ENCODE measurements at regions of chr15 and their contacts with region 1.

Region 1: DNA sequence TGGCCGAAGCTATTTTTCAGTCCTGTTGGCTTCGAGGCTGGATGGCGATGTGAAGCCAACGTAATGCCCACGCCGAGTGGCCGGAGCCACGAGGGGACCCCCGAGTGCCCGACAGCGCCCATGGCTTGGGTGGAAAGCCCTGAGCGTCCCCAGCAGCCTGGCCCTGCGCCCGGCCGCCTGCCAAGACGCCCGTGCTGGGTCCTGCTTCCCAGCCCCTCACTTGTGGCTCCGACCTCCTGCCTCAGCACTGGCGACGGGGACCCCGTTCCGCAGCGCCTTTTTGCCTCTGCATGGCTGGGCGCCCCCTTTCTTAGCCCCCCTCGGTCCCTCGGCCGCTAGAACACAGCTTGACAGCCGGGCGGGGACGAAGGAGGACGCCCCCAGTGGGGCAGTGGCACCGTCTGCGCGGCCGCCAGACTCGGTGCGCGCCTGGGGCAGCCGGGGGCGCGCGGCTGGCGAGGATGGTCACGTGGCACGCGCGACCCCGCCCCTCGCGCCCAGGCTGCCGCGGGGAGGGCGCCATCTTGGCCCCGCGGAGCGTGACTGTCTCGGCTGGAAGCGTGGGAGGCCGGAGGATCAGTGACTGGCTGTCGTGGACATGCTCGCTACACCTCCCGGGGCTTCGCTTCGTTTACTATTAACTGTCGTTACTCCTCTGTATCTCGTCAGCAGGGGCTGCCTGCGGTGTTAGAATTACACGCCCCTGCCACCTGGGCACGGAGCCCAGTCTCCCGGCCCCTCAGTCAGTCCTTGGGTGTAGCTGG is 626 bp upstream of the GPR176 start:
- DNase-seq: peak; percentile 58 to 86 (median 73)
- ATAC-seq: peak; percentile 97
- H3K4me3 ChIP-seq: peak overlapping the region; percentile 80
- H3K4me3 Mint-ChIP-seq: peak overlapping the region; percentile 75 to 92 (median 88)
- H3K27ac ChIP-seq: no peak overlapping the region
- H3K27ac Mint-ChIP-seq: peak overlapping the region in 8 of 9 donors; percentile 43 to 90 (median 77)
- H3K4me1 ChIP-seq: peaks cover 0 to 5% of the 10 kb centered on the region in 2 donors
- H3K4me1 Mint-ChIP-seq: peaks cover 6 to 29% (median 12%) of the 10 kb centered on the region in 7 donors
- H3K27me3 ChIP-seq: peaks cover 5 to 15% of the 10 kb centered on the region in 2 donors
- H3K27me3 Mint-ChIP-seq: peaks cover 14 to 32% (median 23%) of the 10 kb centered on the region in 5 donors

Region 2: GRCh38 chr15:39887832-39888231 is 32.9 kb before region 1 on chr15:
- CTCF ChIA-PET with region 1: no interaction called
- POLR2A ChIA-PET with region 1: no interaction called
- intact Hi-C with region 1: no loop called
- DNase-seq: peak in 1 of 9 donors; percentile 8
- ATAC-seq: no peak
- H3K4me3 ChIP-seq: no peak overlapping the region
- H3K4me3 Mint-ChIP-seq: no peak overlapping the region
- H3K27ac ChIP-seq: no peak overlapping the region
- H3K27ac Mint-ChIP-seq: no peak overlapping the region
- H3K4me1 ChIP-seq: no peaks in the 10 kb centered on the region
- H3K4me1 Mint-ChIP-seq: no peaks in the 10 kb centered on the region
- H3K27me3 ChIP-seq: no peaks in the 10 kb centered on the region
- H3K27me3 Mint-ChIP-seq: peaks cover 3 to 34% (median 10%) of the 10 kb centered on the region in 5 donors

Region 3: GRCh38 chr15:40038638-40039543 is 118.2 kb after region 1 on chr15 and contains the start of gene SRP14:
- CTCF ChIA-PET with region 1: no interaction called
- POLR2A ChIA-PET with region 1: no interaction called
- intact Hi-C with region 1: loop called (anchors 2 to 5 kb)
- DNase-seq: peak; percentile 74 to 93 (median 87)
- ATAC-seq: peak; percentile 98
- H3K4me3 ChIP-seq: peak within 1 kb of the TSS; percentile 86
- H3K4me3 Mint-ChIP-seq: peak within 1 kb of the TSS; percentile 92 to 100 (median 100)
- H3K27ac ChIP-seq: peak within 1 kb of the TSS; percentile 96
- H3K27ac Mint-ChIP-seq: peak within 1 kb of the TSS; percentile 94 to 99 (median 98)
- H3K4me1 ChIP-seq: peaks cover 15 to 18% of the 10 kb centered on the region in 2 donors
- H3K4me1 Mint-ChIP-seq: peaks cover 28 to 58% (median 53%) of the 10 kb centered on the region in 7 donors
- H3K27me3 ChIP-seq: no peaks in the 10 kb centered on the region
- H3K27me3 Mint-ChIP-seq: no peaks in the 10 kb centered on the region
- total RNA-seq, gene SRP14: 92.1 to 157 (median 111) TPM

Measured in naive thymus-derived CD4-positive, alpha-beta T cell (primary cell).